Naive thymus-derived CD4-positive, alpha-beta T cell (primary cell): ENCODE measurements at regions of chr19 and their contacts with region 1.

Region 1: DNA sequence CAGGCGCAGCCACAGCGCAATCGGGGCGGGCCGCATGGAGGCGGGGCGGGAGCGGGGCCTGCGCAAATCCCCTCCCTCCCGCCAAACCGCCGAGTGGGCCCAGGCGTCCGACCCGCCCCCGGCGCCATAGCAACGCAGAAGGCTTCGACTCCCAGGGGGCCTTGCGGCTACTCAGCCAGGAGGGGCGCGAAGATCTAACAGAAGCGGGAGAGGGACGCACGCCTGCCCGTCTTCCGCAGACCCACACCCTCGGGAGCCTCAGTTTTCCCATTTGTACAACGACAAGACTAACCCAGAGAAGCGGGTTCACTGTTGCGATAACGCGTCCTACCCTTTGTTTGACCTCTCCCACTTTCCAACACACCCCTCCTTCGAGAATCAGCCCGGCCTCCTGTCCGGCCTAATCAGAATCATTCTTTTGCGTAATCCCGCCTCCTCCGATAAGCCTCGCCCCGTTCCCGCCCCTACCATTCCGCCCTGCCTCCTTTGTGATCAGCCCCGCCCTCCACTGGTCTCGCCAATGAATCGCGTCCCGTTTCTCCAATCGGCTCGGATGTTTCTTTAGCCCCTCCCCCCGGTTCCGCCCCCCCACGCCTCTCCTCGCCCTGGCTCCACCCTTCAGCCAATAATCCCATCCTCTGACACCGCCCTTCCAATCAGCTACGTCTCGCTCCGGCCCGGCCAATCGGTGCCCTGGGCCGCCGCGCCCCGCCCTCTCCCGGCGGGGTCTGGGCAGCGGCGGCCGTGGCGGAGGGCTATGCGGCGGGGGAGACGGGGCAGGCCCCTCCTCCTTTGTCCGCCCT is at the start of gene PCSK4:
- DNase-seq: peak; percentile 84 to 99 (median 98)
- ATAC-seq: peak; percentile 93
- H3K4me3 ChIP-seq: peak within 1 kb of the TSS; percentile 77
- H3K4me3 Mint-ChIP-seq: peak within 1 kb of the TSS; percentile 83 to 94 (median 92)
- H3K27ac ChIP-seq: peak within 1 kb of the TSS; percentile 63
- H3K27ac Mint-ChIP-seq: peak within 1 kb of the TSS; percentile 83 to 96 (median 86)
- H3K4me1 ChIP-seq: peaks cover 9 to 10% of the 10 kb centered on the region in 2 donors
- H3K4me1 Mint-ChIP-seq: peaks cover 7 to 17% (median 15%) of the 10 kb centered on the region in 7 donors
- H3K27me3 ChIP-seq: no peaks in the 10 kb centered on the region
- H3K27me3 Mint-ChIP-seq: peaks cover 0 to 14% (median 0%) of the 10 kb centered on the region in 5 donors
- total RNA-seq, gene PCSK4: 0.87 to 10.8 (median 7.8) TPM

Region 2: DNA sequence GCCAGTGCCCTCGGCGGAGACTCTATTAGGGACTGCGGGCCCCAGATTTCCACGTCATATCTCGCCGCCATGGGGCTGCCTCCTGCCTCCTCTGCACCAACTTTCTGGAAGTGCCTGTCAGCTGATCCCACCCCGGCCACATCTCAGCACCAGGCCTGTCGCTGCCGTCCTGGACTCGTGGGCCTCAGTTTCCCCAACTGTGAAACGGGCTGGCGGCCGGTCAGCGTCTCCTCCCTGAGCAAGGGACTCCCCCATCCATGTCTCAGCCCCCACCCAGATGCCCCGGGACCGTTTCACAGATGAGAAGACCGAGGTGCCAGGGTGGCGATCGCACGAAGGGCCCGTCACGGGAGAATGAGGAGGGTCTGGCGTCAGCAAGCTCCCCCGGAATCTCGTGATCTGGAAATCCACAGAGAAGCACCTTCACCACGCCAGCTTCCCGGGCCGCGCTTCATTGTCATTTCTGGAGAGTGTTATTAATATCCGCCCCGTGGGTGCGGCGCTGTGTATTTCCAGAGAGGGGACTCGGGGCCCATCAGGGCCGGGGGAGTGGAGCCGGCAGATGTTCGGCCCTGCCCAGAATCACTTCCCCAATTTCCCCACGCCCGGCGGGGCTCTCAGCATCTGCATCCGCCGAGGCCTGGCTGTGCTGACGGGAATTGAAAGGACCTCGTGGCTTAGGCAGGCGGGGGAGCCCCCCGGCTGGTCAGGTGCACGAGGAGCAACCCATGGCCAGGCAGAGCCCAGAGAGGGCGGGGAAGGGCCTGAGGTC is 543.1 kb before region 1 on chr19:
- CTCF ChIA-PET with region 1: no interaction called
- POLR2A ChIA-PET with region 1: no interaction called
- intact Hi-C with region 1: no loop called
- DNase-seq: no peak
- ATAC-seq: peak; percentile 86
- H3K4me3 ChIP-seq: no peak overlapping the region
- H3K4me3 Mint-ChIP-seq: no peak overlapping the region
- H3K27ac ChIP-seq: no peak overlapping the region
- H3K27ac Mint-ChIP-seq: no peak overlapping the region
- H3K4me1 ChIP-seq: no peaks in the 10 kb centered on the region
- H3K4me1 Mint-ChIP-seq: peaks cover 0 to 9% (median 0%) of the 10 kb centered on the region in 7 donors
- H3K27me3 ChIP-seq: no peaks in the 10 kb centered on the region
- H3K27me3 Mint-ChIP-seq: no peaks in the 10 kb centered on the region

Region 3: DNA sequence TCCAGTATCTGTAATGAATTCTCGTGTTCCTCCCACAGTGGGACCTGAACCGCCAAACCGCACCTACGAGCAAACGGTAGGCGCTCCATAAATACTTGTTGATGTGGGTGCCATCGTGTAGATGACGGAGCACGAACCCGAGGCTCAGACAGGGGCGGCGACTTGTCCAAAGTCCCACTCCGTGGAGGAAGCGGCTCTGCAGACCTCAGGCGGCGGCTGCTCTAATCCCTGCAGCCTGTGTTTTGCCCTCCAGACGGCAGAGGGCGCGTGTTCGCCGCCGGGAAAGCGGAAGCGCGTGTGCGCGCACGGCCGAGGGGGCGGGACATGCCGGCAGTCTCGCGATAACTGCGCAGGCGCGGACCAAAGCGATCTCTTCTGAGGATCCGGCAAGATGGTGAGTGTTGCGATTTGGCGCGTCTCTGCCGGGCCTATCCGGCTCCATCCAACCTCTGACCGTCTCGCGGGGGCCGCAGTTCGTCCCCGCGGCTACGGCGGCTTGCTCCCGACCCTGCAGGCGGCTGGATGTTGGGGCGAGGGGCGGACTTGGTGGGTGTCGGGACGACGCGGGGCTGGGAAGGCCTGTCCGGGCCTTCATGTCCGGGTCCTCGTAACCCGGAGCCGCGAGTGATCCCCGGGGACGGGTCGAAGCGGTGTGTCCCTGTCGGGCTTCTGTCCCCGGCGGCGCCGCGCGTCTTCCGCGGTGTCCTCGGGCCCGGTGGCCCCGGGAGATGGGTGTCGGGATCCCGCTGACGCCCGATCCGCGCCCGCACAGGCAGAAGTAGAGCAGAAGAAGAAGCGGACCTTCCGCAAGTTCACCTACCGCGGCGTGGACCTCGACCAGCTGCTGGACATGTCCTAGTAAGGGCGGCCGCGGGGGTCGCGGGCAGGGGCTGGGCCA is 52.2 kb before region 1 on chr19 and contains the start of gene RPS15:
- CTCF ChIA-PET with region 1: no interaction called
- POLR2A ChIA-PET with region 1: no interaction called
- intact Hi-C with region 1: loop called in 1 of 2 experiments (anchors 1 kb)
- DNase-seq: peak; percentile 92 to 98 (median 96)
- ATAC-seq: peak; percentile 97
- H3K4me3 ChIP-seq: peak within 1 kb of the TSS; percentile 82
- H3K4me3 Mint-ChIP-seq: peak within 1 kb of the TSS; percentile 87 to 99 (median 98)
- H3K27ac ChIP-seq: peak within 1 kb of the TSS; percentile 92
- H3K27ac Mint-ChIP-seq: peak within 1 kb of the TSS; percentile 96 to 100 (median 99)
- H3K4me1 ChIP-seq: peaks cover 8 to 11% of the 10 kb centered on the region in 2 donors
- H3K4me1 Mint-ChIP-seq: peaks cover 9 to 34% (median 15%) of the 10 kb centered on the region in 7 donors
- H3K27me3 ChIP-seq: no peaks in the 10 kb centered on the region
- H3K27me3 Mint-ChIP-seq: no peaks in the 10 kb centered on the region
- total RNA-seq, gene RPS15: 1,300 to 2,097 (median 2,012) TPM

Region 4: GRCh38 chr19:1478934-1479707 is 11.4 kb before region 1 on chr19 and contains the start of gene C19orf25:
- CTCF ChIA-PET with region 1: no interaction called
- POLR2A ChIA-PET with region 1: interaction called, 5 read pairs
- intact Hi-C with region 1: loop called (anchors 1 kb)
- DNase-seq: peak; percentile 81 to 94 (median 88)
- ATAC-seq: peak; percentile 98
- H3K4me3 ChIP-seq: peak within 1 kb of the TSS; percentile 82
- H3K4me3 Mint-ChIP-seq: peak within 1 kb of the TSS; percentile 96 to 100 (median 98)
- H3K27ac ChIP-seq: peak within 1 kb of the TSS; percentile 86
- H3K27ac Mint-ChIP-seq: peak within 1 kb of the TSS; percentile 94 to 98 (median 96)
- H3K4me1 ChIP-seq: peaks cover 6 to 12% of the 10 kb centered on the region in 2 donors
- H3K4me1 Mint-ChIP-seq: peaks cover 11 to 24% (median 15%) of the 10 kb centered on the region in 7 donors
- H3K27me3 ChIP-seq: no peaks in the 10 kb centered on the region
- H3K27me3 Mint-ChIP-seq: peaks cover 0 to 3% (median 0%) of the 10 kb centered on the region in 5 donors
- total RNA-seq, gene C19orf25: 24.2 to 64.5 (median 44.6) TPM

Region 5: DNA sequence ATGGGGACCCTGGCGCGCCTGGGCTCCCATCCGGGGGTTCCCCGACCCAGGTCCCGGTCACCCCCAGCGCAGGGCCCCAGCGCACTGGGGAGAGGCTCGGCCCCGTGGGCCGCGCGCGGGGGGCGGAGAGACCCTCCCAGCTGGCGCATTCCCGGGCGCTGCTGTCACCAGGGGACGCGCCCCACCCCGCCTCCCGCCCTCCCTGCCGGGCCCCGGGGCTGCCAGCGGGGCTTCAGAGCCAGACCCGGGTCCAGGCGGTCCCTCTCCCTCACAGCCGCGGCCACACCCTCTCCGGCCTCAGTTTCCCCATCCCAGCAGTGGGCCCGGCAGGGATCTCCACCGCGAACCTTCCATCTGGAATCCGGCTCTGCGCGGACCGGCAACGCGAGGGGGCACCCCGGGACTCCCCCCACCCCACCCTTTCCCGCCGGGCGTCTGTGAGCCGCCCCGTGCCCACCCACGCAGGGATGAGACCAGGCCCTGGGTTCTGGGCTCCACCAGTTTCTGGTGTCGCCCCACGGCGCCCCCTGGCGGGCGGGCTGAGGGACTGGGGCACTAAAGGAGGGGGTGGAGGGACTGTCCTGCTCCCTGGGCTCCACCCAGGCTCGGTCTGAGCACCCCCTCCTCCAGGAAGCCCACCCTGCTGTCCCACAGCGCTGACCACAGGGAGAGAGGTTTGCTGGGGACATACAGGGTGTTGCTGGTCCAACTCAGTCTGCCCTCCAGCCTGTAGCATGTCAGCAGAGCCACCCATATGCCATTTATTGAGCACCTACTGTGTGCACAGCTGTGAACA is 23.2 kb after region 1 on chr19:
- CTCF ChIA-PET with region 1: no interaction called
- POLR2A ChIA-PET with region 1: interaction called, 3 read pairs
- intact Hi-C with region 1: loop called in 1 of 2 experiments (anchors 2 kb)
- DNase-seq: peak; percentile 44 to 83 (median 64)
- ATAC-seq: peak; percentile 74
- H3K4me3 ChIP-seq: no peak overlapping the region
- H3K4me3 Mint-ChIP-seq: peak overlapping the region in 5 of 10 donors; percentile 17 to 62 (median 33)
- H3K27ac ChIP-seq: no peak overlapping the region
- H3K27ac Mint-ChIP-seq: no peak overlapping the region
- H3K4me1 ChIP-seq: peaks cover 0 to 13% of the 10 kb centered on the region in 2 donors
- H3K4me1 Mint-ChIP-seq: peaks cover 0 to 27% (median 15%) of the 10 kb centered on the region in 7 donors
- H3K27me3 ChIP-seq: no peaks in the 10 kb centered on the region
- H3K27me3 Mint-ChIP-seq: peaks cover 0 to 21% (median 0%) of the 10 kb centered on the region in 5 donors

Region 6: GRCh38 chr19:1524292-1524971 is 33.9 kb after region 1 on chr19:
- CTCF ChIA-PET with region 1: no interaction called
- POLR2A ChIA-PET with region 1: no interaction called
- intact Hi-C with region 1: no loop called
- DNase-seq: no peak
- ATAC-seq: no peak
- H3K4me3 ChIP-seq: no peak overlapping the region
- H3K4me3 Mint-ChIP-seq: peak overlapping the region in 8 of 10 donors; percentile 5 to 72 (median 58)
- H3K27ac ChIP-seq: no peak overlapping the region
- H3K27ac Mint-ChIP-seq: peak overlapping the region in 1 of 9 donors; percentile 32
- H3K4me1 ChIP-seq: no peaks in the 10 kb centered on the region
- H3K4me1 Mint-ChIP-seq: peaks cover 0 to 9% (median 8%) of the 10 kb centered on the region in 7 donors
- H3K27me3 ChIP-seq: no peaks in the 10 kb centered on the region
- H3K27me3 Mint-ChIP-seq: peaks cover 26 to 39% (median 30%) of the 10 kb centered on the region in 5 donors

Region 7: GRCh38 chr19:1605236-1606137 is 115.0 kb after region 1 on chr19 and contains the start of gene UQCR11:
- CTCF ChIA-PET with region 1: no interaction called
- POLR2A ChIA-PET with region 1: interaction called, 3 read pairs
- intact Hi-C with region 1: loop called (anchors 1 to 5 kb)
- DNase-seq: peak; percentile 76 to 94 (median 91)
- ATAC-seq: peak; percentile 89
- H3K4me3 ChIP-seq: peak within 1 kb of the TSS; percentile 79
- H3K4me3 Mint-ChIP-seq: peak within 1 kb of the TSS; percentile 92 to 99 (median 96)
- H3K27ac ChIP-seq: peak within 1 kb of the TSS; percentile 97
- H3K27ac Mint-ChIP-seq: peak within 1 kb of the TSS; percentile 92 to 100 (median 98)
- H3K4me1 ChIP-seq: peaks cover 28 to 40% of the 10 kb centered on the region in 2 donors
- H3K4me1 Mint-ChIP-seq: peaks cover 20 to 63% (median 44%) of the 10 kb centered on the region in 7 donors
- H3K27me3 ChIP-seq: no peaks in the 10 kb centered on the region
- H3K27me3 Mint-ChIP-seq: no peaks in the 10 kb centered on the region
- total RNA-seq, gene UQCR11: 94.3 to 170 (median 123) TPM

Region 8: DNA sequence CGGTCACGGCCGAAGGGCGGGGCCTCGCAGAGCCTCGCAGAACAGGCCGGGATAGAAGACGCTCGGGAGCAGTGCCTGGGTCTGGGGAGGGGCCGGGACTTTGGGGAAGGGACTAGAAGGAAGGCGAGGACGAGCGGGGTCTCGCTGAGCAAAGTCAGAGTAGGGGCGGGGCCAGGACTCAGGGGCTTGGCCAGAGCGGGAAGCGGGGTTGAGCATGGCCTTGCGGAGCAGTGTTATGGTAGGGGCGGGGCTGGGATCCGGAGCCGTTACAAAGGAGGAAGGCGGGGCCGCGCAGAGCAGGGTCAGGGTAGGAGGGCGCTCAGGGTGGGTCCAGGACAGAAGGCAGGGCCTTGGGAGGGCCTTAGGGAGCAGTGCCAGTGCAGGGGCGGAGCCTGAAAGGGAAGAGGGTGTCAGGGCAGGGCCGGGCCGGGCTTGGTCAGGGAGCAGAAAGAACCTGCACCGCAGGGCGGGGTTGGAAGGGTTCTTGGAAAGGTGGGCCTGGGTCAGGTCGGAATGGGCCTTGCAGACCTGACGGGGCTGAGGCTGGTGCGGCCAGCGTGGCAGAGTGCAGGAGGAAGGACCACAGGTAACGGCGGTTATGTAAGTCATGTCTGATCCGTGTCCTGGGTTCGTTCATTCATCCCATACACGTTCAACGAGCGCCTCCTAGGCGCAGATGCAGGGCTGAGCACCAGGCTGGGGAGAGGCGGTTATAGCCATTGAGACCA is 322.1 kb after region 1 on chr19:
- CTCF ChIA-PET with region 1: no interaction called
- POLR2A ChIA-PET with region 1: no interaction called
- intact Hi-C with region 1: loop called in 1 of 2 experiments (anchors 1 kb)
- DNase-seq: peak; percentile 70 to 88 (median 84)
- ATAC-seq: peak; percentile 85
- H3K4me3 ChIP-seq: peak overlapping the region; percentile 65
- H3K4me3 Mint-ChIP-seq: peak overlapping the region; percentile 93 to 99 (median 96)
- H3K27ac ChIP-seq: peak overlapping the region; percentile 63
- H3K27ac Mint-ChIP-seq: peak overlapping the region; percentile 82 to 97 (median 92)
- H3K4me1 ChIP-seq: peaks cover 0 to 8% of the 10 kb centered on the region in 2 donors
- H3K4me1 Mint-ChIP-seq: peaks cover 9 to 19% (median 11%) of the 10 kb centered on the region in 7 donors
- H3K27me3 ChIP-seq: no peaks in the 10 kb centered on the region
- H3K27me3 Mint-ChIP-seq: no peaks in the 10 kb centered on the region

Region 9: DNA sequence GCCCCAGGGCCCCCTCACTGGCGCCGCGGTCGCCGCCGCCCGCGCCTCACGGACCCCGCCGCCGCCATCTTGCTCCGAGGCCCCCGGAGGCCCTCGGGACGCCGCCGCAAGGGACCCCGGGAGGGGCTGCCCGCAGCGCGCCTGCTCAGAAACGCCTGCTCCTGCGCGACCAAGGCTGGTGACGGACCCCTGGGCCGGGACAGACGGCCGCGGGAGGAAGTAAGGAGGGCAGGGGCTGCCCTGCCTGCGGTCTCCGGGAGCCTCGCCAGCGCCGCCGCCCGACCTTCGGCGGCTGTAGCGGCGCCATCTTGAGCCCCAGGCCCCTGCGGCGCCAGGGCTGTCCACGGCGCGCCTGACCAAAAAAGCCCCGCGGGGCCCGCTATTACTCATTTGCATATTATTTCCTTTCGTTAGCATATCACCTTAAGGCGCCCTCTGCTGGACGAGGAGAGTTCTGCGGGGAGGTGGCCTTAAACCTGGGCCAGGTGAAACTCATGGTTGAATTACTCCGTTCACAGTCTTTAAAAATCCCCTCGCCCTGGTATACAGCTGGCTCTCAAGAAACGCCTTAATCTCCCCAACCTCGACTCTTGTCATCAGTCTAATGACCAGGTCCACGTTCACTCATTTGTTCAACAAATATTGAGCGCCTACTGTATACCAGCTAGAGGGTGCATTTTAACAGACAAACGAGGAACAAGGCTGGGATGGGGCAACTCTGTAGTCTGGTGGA is 358.1 kb after region 1 on chr19 and contains the start of gene REXO1:
- CTCF ChIA-PET with region 1: no interaction called
- POLR2A ChIA-PET with region 1: no interaction called
- intact Hi-C with region 1: no loop called
- DNase-seq: peak; percentile 96 to 100 (median 98)
- ATAC-seq: peak; percentile 90
- H3K4me3 ChIP-seq: peak within 1 kb of the TSS; percentile 85
- H3K4me3 Mint-ChIP-seq: peak within 1 kb of the TSS; percentile 83 to 95 (median 91)
- H3K27ac ChIP-seq: peak within 1 kb of the TSS; percentile 99
- H3K27ac Mint-ChIP-seq: peak within 1 kb of the TSS; percentile 85 to 95 (median 93)
- H3K4me1 ChIP-seq: peaks cover 30 to 67% of the 10 kb centered on the region in 2 donors
- H3K4me1 Mint-ChIP-seq: peaks cover 36 to 72% (median 52%) of the 10 kb centered on the region in 7 donors
- H3K27me3 ChIP-seq: no peaks in the 10 kb centered on the region
- H3K27me3 Mint-ChIP-seq: no peaks in the 10 kb centered on the region
- total RNA-seq, gene REXO1: 52.7 to 92.6 (median 73.1) TPM